ENCODE measurements at regions of chr11 and their contacts with region 1.

Region 1: DNA sequence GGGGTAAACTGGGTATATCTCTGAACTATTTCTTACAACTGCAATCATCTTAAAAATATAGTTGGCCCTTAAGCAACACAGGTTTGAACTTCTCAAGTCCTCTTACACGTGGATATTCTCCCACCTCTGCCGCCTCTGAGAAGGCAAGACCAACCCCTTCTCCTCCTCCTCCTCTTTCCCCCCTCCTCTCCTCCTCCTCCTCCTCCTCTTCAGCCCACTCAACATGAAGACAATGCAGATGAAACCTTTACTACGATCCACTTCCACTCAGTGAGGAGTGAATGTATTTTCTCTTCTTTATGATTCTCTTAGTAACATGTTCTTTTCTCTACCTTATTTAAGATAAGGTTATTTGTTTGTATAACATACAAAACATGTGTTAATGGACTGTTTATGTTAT is 20.0 kb downstream of the SHANK2 start:
- DNase-seq: no peak
- H3K4me3 ChIP-seq: no peak overlapping the region
- H3K27ac ChIP-seq: no peak overlapping the region
- H3K4me1 ChIP-seq: no peaks in the 10 kb centered on the region
- H3K27me3 ChIP-seq: no peaks in the 10 kb centered on the region
- CTCF ChIP-seq: no peak
- POLR2A ChIP-seq: no peak

Region 2: GRCh38 chr11:71201681-71202579 is 30.4 kb before region 1 on chr11:
- intact Hi-C with region 1: loop called (anchors 2 kb)
- DNase-seq: no peak
- H3K4me3 ChIP-seq: no peak overlapping the region
- H3K27ac ChIP-seq: no peak overlapping the region
- H3K4me1 ChIP-seq: no peaks in the 10 kb centered on the region
- H3K27me3 ChIP-seq: no peaks in the 10 kb centered on the region
- CTCF ChIP-seq: no peak
- POLR2A ChIP-seq: no peak

Region 3: GRCh38 chr11:71263386-71263785 is 31.0 kb after region 1 on chr11:
- intact Hi-C with region 1: no loop called
- DNase-seq: no peak
- H3K4me3 ChIP-seq: no peak overlapping the region
- H3K27ac ChIP-seq: no peak overlapping the region
- H3K4me1 ChIP-seq: no peaks in the 10 kb centered on the region
- H3K27me3 ChIP-seq: no peaks in the 10 kb centered on the region
- CTCF ChIP-seq: no peak
- POLR2A ChIP-seq: no peak